Heart left ventricle (tissue), 16 donors: ENCODE measurements at regions of chr17 and their contacts with region 1.

Region 1: GRCh38 chr17:11578998-11579397 is 19.3 kb upstream of the DNAH9 start:
- DNase-seq: no peak
- ATAC-seq: no peak
- H3K4me3 ChIP-seq: no peak overlapping the region
- H3K27ac ChIP-seq: no peak overlapping the region
- H3K4me1 ChIP-seq: no peaks in the 10 kb centered on the region
- H3K27me3 ChIP-seq: no peaks in the 10 kb centered on the region
- CTCF ChIP-seq: no peak
- POLR2A ChIP-seq: no peak

Region 2: GRCh38 chr17:11511696-11512095 is 67.3 kb before region 1 on chr17:
- intact Hi-C with region 1: loop called in 1 of 10 experiments (anchors 10 kb)
- DNase-seq: no peak
- ATAC-seq: no peak
- H3K4me3 ChIP-seq: no peak overlapping the region
- H3K27ac ChIP-seq: no peak overlapping the region
- H3K4me1 ChIP-seq: no peaks in the 10 kb centered on the region
- H3K27me3 ChIP-seq: peaks cover 0 to 12% (median 0%) of the 10 kb centered on the region in 9 donors
- CTCF ChIP-seq: no peak
- POLR2A ChIP-seq: no peak